Activated CD4-positive, alpha-beta T cell treated with anti-CD3 and anti-CD28 coated beads for 36 hours (primary cell): ENCODE measurements at regions of chr7 and their contacts with region 1.

Region 1: DNA sequence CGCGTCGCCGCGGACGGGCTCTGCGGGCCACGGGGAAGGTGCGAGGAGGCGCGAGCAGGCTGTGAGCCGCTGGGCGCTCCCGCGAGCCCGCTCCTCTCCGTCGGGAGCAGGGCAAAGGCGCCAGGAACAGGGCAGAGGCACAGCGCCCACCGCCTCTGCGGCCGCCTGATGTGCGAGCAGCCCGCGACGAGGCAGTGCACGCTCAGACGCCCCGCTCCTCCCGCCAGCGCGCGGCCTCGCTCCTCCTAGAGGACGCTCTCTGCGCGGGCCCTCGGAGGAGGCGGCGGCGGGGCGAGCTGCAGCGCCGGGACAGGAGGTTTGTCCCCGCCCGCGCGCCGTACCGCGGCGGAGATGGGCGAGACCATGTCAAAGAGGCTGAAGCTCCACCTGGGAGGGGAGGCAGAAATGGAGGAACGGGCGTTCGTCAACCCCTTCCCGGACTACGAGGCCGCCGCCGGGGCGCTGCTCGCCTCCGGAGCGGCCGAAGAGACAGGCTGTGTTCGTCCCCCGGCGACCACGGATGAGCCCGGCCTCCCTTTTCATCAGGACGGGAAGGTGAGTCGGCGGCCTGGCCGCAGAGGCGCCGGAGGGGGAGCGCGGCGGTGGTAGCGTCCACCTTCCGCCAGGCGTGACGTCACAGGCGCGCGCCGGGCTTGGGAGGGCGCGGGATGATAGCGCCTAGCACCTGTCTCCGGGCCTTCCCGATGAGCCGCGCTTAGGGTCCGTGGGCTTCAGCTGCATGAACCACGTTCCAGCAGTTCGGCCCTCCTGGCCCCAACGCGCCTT is 731 bp downstream of the LANCL2 start:
- DNase-seq: peak; percentile 96
- ATAC-seq: peak; percentile 88
- H3K4me3 Mint-ChIP-seq: peak overlapping the region; percentile 94
- H3K27ac Mint-ChIP-seq: peak overlapping the region; percentile 97
- H3K4me1 Mint-ChIP-seq: peaks cover 25% of the 10 kb centered on the region
- H3K27me3 Mint-ChIP-seq: no peaks in the 10 kb centered on the region

Region 2: GRCh38 chr7:54921116-54921515 is 444.8 kb before region 1 on chr7:
- CTCF ChIA-PET with region 1: no interaction called
- POLR2A ChIA-PET with region 1: no interaction called
- intact Hi-C with region 1: no loop called
- DNase-seq: no peak
- ATAC-seq: no peak
- H3K4me3 Mint-ChIP-seq: no peak overlapping the region
- H3K27ac Mint-ChIP-seq: no peak overlapping the region
- H3K4me1 Mint-ChIP-seq: no peaks in the 10 kb centered on the region
- H3K27me3 Mint-ChIP-seq: peaks cover 15% of the 10 kb centered on the region

Region 3: DNA sequence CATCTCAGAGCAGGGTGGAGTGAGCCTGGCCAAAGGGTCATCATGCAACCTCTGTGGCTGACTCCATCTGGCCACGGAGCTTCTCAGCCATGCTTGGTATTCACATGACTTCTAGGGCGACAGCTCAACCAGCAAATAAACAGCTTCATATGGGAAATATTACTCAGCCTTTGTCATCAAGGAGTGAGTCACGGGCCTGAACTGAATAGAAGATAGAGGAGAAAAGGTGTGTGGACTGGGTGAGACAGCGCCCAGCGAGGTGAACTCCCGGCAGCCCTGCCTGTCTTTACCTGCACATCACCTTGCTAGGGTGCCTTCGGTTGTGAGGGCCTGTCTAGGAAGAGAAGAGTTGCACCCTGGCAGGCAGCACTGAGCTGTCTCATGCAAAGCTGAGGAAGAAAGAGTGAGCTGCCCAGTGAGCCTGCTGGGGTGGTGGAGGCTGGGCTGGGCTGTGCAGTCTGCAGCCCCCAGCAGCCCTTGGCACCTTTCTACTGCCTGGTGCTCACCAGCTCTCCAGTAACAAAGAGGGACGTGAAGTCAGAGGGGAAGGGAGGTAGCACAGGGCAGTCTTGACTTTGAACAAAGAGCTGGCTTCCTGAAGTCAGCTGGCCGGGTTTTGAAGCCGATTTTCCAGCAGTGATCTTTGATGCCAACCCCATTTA is 232.8 kb before region 1 on chr7:
- CTCF ChIA-PET with region 1: no interaction called
- POLR2A ChIA-PET with region 1: no interaction called
- intact Hi-C with region 1: loop called in 1 of 2 experiments (anchors 10 kb)
- DNase-seq: peak; percentile 63
- ATAC-seq: peak; percentile 82
- H3K4me3 Mint-ChIP-seq: no peak overlapping the region
- H3K27ac Mint-ChIP-seq: peak overlapping the region; percentile 72
- H3K4me1 Mint-ChIP-seq: peaks cover 38% of the 10 kb centered on the region
- H3K27me3 Mint-ChIP-seq: peaks cover 16% of the 10 kb centered on the region

Region 4: GRCh38 chr7:55280031-55280454 is 85.8 kb before region 1 on chr7:
- CTCF ChIA-PET with region 1: interaction called, 3 read pairs
- POLR2A ChIA-PET with region 1: no interaction called
- intact Hi-C with region 1: loop called (anchors 1 to 5 kb)
- DNase-seq: peak; percentile 77
- ATAC-seq: peak; percentile 82
- H3K4me3 Mint-ChIP-seq: no peak overlapping the region
- H3K27ac Mint-ChIP-seq: no peak overlapping the region
- H3K4me1 Mint-ChIP-seq: no peaks in the 10 kb centered on the region
- H3K27me3 Mint-ChIP-seq: no peaks in the 10 kb centered on the region

Region 5: DNA sequence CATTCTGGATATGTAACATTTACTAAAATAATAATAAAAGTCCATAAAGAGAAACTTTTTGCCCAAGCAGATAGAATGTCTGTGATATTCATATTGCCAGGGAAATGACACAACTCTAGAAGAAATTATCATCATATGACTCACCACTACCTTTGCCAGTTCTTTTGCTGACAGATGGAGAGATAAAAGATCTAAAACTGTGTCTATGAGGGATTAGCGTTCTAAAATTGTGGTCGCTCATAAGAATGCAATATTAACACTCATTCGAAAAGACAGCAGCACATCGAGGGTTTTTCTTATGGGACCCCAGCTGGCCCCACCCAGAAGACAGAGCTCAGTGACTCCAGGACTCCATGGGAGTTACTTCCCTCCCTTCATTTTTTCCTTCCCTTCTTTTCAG is 17.4 kb before region 1 on chr7:
- CTCF ChIA-PET with region 1: no interaction called
- POLR2A ChIA-PET with region 1: no interaction called
- intact Hi-C with region 1: loop called in 1 of 2 experiments (anchors 2 kb)
- DNase-seq: no peak
- ATAC-seq: peak; percentile 70
- H3K4me3 Mint-ChIP-seq: no peak overlapping the region
- H3K27ac Mint-ChIP-seq: no peak overlapping the region
- H3K4me1 Mint-ChIP-seq: peaks cover 10% of the 10 kb centered on the region
- H3K27me3 Mint-ChIP-seq: peaks cover 20% of the 10 kb centered on the region

Region 6: GRCh38 chr7:55887821-55888247 is 522.0 kb after region 1 on chr7:
- CTCF ChIA-PET with region 1: no interaction called
- POLR2A ChIA-PET with region 1: no interaction called
- intact Hi-C with region 1: loop called in 1 of 2 experiments (anchors 1 kb)
- DNase-seq: peak; percentile 21
- ATAC-seq: no peak
- H3K4me3 Mint-ChIP-seq: peak overlapping the region; percentile 80
- H3K27ac Mint-ChIP-seq: peak overlapping the region; percentile 82
- H3K4me1 Mint-ChIP-seq: peaks cover 5% of the 10 kb centered on the region
- H3K27me3 Mint-ChIP-seq: no peaks in the 10 kb centered on the region

Region 7: GRCh38 chr7:56009695-56010094 is 643.8 kb after region 1 on chr7:
- CTCF ChIA-PET with region 1: no interaction called
- POLR2A ChIA-PET with region 1: no interaction called
- intact Hi-C with region 1: no loop called
- DNase-seq: no peak
- ATAC-seq: no peak
- H3K4me3 Mint-ChIP-seq: no peak overlapping the region
- H3K27ac Mint-ChIP-seq: no peak overlapping the region
- H3K4me1 Mint-ChIP-seq: no peaks in the 10 kb centered on the region
- H3K27me3 Mint-ChIP-seq: no peaks in the 10 kb centered on the region

Region 8: GRCh38 chr7:56051339-56052191 is 685.7 kb after region 1 on chr7 and contains the starts of genes CCT6A and PSPH:
- CTCF ChIA-PET with region 1: no interaction called
- POLR2A ChIA-PET with region 1: no interaction called
- intact Hi-C with region 1: loop called in 1 of 2 experiments (anchors 5 kb)
- DNase-seq: peak; percentile 95
- ATAC-seq: peak; percentile 95
- H3K4me3 Mint-ChIP-seq: peak within 1 kb of the TSS; percentile 96
- H3K27ac Mint-ChIP-seq: peak within 1 kb of the TSS; percentile 95
- H3K4me1 Mint-ChIP-seq: peaks cover 49% of the 10 kb centered on the region
- H3K27me3 Mint-ChIP-seq: no peaks in the 10 kb centered on the region
- total RNA-seq, gene CCT6A: 182 to 237 TPM
- total RNA-seq, gene PSPH: 24.4 to 30.3 TPM